Esophagus muscularis mucosa (tissue), 4 donors: ENCODE measurements at regions of chr11 and their contacts with region 1.

Region 1: GRCh38 chr11:110429731-110430266 is at the start of gene FDX1:
- DNase-seq: peak; percentile 94
- H3K4me3 ChIP-seq: peak within 1 kb of the TSS; percentile 75 to 99 (median 80)
- H3K27ac ChIP-seq: peak within 1 kb of the TSS; percentile 88 to 97 (median 91)
- H3K4me1 ChIP-seq: peaks cover 27 to 46% (median 45%) of the 10 kb centered on the region in 4 donors
- H3K27me3 ChIP-seq: no peaks in the 10 kb centered on the region
- CTCF ChIP-seq: peak; percentile 59 to 85 (median 64)
- EP300 ChIP-seq: no peak
- POLR2A ChIP-seq: no peak
- total RNA-seq, gene FDX1: 12.0 to 15.7 (median 13.6) TPM

Region 2: GRCh38 chr11:110195845-110196754 is 233.7 kb before region 1 on chr11:
- intact Hi-C with region 1: loop called (anchors 1 kb)
- DNase-seq: peak; percentile 50
- H3K4me3 ChIP-seq: no peak overlapping the region
- H3K27ac ChIP-seq: no peak overlapping the region
- H3K4me1 ChIP-seq: no peaks in the 10 kb centered on the region
- H3K27me3 ChIP-seq: no peaks in the 10 kb centered on the region
- CTCF ChIP-seq: no peak
- EP300 ChIP-seq: no peak
- POLR2A ChIP-seq: no peak

Region 3: DNA sequence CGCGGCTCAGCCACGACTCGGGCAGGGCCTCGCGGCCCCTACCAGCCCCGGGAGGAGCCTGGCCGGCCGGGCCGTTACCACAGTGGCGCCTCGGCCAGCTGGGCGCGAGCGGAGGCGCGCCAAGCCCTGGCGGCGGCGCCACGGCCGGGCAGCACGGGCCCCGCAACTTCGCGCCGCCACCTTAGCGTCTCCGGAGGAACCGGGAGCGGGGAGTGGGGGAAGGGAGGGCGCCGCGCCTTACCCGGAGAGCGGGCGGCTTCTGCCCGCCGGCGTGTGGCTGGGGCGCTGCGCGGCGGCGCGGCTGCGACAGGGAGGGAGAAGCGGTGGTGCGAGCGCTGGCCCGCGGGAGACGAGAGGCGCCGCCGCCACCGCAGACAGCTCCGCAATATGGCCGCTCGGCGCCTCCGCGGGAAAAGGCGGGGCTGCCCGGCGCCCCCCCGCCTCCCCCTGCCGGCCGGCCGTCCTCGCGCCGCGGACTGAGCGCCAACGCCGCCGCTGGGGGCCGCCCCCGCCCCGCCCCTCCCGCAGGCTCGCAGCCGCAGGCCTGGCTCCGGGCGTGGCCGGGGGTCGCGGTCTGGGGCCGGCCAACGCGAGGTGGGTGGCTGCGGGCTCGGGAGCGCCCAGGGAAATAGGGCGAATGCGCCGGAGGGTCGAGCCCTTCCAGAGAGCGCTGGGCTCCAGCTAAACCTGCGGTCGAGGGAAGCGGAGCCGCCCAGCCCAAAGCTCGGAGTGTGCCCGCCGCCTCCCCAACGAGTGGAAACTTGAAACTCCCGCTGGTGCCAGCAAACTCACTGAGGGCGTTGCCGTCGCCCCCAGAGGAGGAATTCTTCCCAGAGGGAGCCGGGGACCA is 133.3 kb before region 1 on chr11 and contains the start of gene RDX:
- intact Hi-C with region 1: loop called (anchors 2 kb)
- DNase-seq: no peak
- H3K4me3 ChIP-seq: peak within 1 kb of the TSS; percentile 88 to 97 (median 94)
- H3K27ac ChIP-seq: peak within 1 kb of the TSS; percentile 96 to 99 (median 98)
- H3K4me1 ChIP-seq: peaks cover 45 to 57% (median 50%) of the 10 kb centered on the region in 4 donors
- H3K27me3 ChIP-seq: no peaks in the 10 kb centered on the region
- CTCF ChIP-seq: peak; percentile 1 to 12 (median 7)
- EP300 ChIP-seq: no peak
- POLR2A ChIP-seq: peak; percentile 37
- total RNA-seq, gene RDX: 86.6 to 105 (median 90.4) TPM